Posterior vena cava (tissue), 2 donors: ENCODE measurements at regions of chr2 and their contacts with region 1.

Region 1: DNA sequence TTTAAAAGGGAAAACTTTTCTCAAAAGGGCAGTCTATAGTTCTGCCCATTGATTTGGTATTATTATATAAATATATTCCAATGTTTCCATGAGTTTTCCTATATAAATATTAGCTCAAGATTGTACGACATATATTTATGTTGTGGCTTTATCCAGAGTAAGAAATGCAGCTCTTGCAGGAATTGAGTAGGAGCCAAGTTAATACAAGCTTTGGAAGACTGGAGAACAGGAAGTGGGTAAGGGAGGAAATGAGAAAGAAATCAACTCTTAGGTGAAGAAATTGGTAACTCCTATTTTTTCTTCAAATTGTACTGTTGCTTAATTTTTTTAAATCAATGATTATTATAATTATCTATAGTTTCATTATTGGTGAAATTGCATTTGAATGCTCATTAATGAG is 105.4 kb upstream of the FAM117B start:
- DNase-seq: no peak

Region 2: DNA sequence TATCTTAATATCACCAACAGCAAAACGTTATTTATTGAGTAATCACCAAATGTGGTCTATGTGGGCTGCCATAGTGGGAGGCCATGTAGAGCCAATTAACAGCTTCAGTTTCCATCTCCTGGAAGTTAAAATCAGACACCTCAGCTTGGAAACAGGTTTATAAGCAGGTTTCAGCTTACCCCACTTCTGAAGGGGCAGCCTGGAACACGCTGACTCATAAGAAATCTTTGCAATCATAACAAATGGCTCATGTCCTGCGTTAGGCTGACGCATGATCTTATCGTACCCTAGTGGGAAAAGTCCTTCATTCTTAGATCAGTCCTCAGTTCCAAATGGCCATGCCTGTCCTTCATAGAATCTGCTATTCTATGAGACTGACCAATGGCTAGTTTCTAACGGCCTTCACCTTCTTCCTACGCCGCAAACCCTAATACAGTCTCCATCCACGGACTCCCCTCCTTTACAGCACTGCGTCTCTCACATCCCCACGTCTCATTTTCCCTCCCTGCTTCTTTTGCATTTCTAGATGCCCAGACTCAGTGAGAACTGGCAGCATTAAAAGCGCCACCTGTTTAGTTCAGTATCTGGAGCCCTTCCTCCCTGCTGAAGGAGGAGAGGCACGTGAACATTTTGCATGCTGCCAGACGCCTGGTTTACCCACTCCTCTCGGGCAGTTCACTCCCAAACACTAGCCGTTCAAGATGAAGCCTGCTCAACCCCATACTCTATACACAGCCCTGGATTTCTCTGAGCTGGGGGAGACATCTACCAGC is 1741.9 kb before region 1 on chr2:
- intact Hi-C with region 1: no loop called
- DNase-seq: no peak

Region 3: DNA sequence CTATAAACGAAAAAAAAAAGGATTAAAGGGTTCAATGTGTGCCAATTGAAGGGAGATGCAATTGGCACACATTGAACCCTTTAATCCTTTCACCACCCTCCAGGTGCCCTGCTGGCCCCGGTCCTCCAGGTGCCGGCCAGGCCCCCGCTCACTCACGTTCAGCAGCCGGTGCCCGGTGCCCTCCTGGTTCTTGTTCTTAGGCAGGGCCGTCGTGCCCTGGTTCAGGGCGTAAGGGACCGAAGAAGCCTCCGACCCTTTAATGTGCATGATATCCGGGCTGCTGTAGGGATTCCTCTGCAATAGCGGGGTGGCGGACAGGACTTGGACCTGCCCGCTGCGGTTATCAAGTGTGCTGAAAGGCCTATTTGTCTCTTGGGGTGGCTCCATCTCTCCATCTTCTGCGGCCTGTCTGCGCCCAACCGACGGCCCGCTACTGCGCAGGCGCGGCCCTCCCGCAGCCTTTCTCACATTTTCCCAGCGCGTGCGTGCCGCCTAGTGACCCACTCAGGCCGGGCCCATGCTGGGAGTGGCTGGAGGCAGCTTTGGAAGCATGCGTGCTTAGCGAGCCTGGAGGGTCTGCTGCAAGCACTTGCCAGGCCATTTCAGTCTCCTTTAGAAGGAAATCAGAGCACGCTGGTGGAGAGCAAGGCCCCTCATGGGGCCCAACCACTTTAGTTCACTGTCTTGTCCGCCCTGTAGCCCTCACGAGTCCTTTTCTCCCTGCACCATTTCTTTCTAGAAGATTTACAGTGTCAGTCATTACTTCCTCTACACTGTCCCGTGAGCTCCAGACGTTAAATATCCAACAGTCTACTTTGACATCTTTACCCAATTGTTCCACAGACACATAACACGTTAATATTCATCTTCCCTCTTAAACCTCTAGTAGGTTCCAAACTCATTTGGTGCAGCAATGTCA is 910.4 kb before region 1 on chr2:
- intact Hi-C with region 1: no loop called
- DNase-seq: peak; percentile 93

Region 4: GRCh38 chr2:202361108-202361507 is 168.3 kb before region 1 on chr2:
- intact Hi-C with region 1: loop called in 1 of 2 experiments (anchors 10 kb)
- DNase-seq: no peak

Region 5: DNA sequence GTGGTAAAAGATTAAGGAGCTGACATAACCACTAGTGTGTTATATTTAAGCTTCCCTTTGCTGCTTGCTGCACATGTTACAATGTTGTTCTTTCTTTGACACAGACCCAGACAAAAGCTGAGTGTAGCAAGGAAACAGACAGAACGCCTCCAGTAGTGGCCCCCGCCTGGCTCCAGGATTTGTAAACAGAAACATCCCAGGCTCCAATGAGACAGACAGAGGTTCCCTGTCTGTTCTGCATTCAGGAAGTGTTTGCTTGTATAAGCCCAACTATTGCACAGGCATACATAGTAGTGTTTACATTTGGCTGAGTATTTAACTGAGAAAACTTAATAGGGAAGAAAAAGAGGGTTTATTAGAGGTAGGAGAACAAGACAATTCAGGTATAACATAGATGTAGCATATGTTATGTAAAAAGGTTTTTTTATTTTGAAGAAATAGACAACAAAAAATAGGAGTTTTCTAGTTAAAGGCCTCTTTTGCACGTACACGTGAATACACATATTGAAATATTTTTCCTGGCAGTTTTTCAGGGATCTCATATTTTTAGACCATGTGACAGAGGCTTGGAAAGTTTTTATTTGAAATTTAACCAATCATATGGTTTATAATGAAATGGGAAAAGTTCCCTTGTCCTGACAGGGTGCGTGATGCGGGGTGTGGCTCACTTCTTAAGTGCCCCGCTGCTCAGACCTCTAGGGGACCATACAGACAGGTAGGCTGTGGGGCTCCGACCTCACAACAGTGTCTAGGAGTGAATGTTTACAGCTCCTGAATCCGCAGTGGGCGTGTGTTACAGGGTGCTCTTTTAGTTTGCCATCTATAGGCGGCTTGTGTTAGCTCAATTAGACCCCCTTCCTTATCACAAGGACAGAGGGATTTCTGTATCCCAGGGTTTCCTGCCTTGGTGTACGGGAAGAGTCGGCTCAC is 34.8 kb before region 1 on chr2:
- intact Hi-C with region 1: no loop called
- DNase-seq: no peak

Region 6: DNA sequence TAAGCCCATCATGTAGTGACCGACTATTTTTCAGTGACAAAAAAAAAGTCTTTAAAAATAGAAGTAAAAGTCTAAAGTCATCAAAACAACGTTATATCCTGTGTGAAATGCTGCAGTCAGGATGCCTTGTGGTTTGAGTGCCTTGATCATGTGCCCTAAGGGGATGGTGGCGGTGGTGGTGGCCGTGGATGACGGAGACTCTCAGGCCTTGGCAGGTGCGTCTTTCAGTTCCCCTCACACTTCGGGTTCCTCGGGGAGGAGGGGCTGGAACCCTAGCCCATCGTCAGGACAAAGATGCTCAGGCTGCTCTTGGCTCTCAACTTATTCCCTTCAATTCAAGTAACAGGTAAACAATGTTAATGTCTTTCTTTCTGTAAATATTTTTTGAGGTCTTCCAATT is 1177.0 kb after region 1 on chr2 and contains the start of gene CD28:
- intact Hi-C with region 1: no loop called
- DNase-seq: peak; percentile 85
- total RNA-seq, gene CD28: 3.8 to 6.3 TPM